ENCODE measurements at regions of chr7 and their contacts with region 1.

Region 1: DNA sequence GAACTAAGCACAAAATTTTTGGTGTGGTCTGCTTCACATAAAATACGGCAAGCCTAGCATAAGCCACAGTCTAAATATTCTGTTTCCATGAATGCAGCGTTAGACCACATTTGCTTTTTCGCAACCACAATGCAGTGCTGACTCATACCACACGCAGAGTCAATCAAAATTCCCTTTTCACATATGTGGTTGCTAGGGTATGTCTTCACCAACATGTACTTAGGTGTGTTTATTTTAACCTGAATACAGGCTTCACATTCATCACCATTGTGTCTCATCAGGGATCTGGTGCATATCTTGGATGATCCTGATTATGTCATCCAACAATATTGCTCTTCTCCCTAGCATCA is 90.8 kb downstream of the CHN2 start:
- DNase-seq: peak in 1 of 2 experiments; percentile 88
- H3K4me3 ChIP-seq: no peak overlapping the region
- H3K27ac ChIP-seq: no peak overlapping the region
- H3K4me1 ChIP-seq: peaks cover 25% of the 10 kb centered on the region
- H3K27me3 ChIP-seq: 0 out of 2 replicates have a peak, but pooled peaks cover 6% of the 10 kb centered on the region
- CTCF ChIP-seq: no peak

Region 2: DNA sequence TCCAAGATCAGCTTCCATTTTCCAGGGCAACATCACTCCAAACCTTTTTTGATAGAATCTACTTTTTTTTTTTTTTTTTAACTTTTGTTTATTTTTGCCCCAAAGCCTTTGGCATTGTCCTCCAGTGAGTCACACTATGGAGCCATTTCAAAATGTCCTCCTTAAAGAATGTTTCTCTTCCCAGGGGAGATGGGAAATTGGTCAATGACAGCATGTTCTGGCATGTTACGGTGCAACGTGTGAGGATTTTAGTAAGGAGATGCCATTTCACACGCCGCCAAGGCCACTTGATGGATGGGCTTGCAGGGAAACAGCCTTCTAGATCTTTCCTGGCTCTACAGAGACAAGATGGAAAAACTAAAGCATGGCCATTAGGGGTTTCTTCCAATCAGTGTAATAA is 296.6 kb before region 1 on chr7:
- CTCF ChIA-PET with region 1: no interaction called
- POLR2A ChIA-PET with region 1: no interaction called
- intact Hi-C with region 1: no loop called
- DNase-seq: peak in 1 of 2 experiments; percentile 70
- H3K4me3 ChIP-seq: no peak overlapping the region
- H3K27ac ChIP-seq: no peak overlapping the region
- H3K4me1 ChIP-seq: peaks cover 18% of the 10 kb centered on the region
- H3K27me3 ChIP-seq: no peaks in the 10 kb centered on the region
- CTCF ChIP-seq: no peak

Region 3: GRCh38 chr7:29189743-29190201 is 95.6 kb before region 1 on chr7:
- CTCF ChIA-PET with region 1: no interaction called
- POLR2A ChIA-PET with region 1: interaction called, 14 read pairs
- intact Hi-C with region 1: no loop called
- DNase-seq: peak in 1 of 2 experiments; percentile 35
- H3K4me3 ChIP-seq: no peak overlapping the region
- H3K27ac ChIP-seq: peak overlapping the region; percentile 61
- H3K4me1 ChIP-seq: peaks cover 47% of the 10 kb centered on the region
- H3K27me3 ChIP-seq: no peaks in the 10 kb centered on the region
- CTCF ChIP-seq: peak; percentile 77